HEK293 (cell line): ENCODE measurements at regions of chr6 and their contacts with region 1.

Region 1: DNA sequence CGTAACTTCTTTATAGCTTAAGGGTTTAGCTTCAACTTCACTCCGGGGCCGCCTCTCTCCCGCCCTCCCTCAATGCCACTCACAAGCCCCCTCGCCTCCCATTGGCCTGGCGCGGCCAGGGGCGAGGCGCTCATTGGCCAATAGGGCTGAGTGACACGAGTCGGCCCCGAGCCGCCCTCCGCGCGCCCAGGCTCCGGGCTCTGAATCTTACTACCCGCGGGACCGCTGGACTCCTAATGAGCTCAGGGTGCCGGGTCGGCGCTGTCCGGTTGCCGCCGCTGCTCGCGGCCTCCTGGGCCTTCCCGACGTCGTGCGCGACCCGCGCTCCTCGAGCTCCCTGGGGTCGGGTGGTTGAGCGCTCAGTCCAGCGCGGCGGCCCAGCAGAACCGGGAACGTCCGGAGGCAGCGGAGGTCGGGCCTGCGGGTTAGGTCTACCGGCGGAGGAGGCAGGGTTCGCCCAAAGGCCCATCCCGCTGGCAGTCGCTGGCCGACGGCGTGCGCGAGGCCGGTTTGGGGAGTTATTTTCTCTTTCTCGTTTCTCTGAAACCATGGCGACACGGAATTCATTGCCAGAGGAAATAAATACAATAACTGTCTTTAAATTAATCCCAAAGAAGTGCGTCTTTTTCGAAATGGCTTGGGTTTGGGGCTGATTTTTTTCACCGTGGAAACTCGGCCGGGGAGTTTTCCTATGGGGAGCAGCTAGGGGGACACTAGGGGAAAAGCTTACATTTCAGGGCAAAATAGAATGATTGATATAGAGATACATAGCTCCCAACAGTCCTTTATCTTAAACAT is at the start of gene SIM1:
- H3K4me3 ChIP-seq: peak within 1 kb of the TSS; percentile 60
- H3K27ac ChIP-seq: peak within 1 kb of the TSS; percentile 75
- H3K4me1 ChIP-seq: peaks cover 3% of the 10 kb centered on the region
- CTCF ChIP-seq: peak; percentile 13; the same call in 1 of the 2 replicates

Region 2: DNA sequence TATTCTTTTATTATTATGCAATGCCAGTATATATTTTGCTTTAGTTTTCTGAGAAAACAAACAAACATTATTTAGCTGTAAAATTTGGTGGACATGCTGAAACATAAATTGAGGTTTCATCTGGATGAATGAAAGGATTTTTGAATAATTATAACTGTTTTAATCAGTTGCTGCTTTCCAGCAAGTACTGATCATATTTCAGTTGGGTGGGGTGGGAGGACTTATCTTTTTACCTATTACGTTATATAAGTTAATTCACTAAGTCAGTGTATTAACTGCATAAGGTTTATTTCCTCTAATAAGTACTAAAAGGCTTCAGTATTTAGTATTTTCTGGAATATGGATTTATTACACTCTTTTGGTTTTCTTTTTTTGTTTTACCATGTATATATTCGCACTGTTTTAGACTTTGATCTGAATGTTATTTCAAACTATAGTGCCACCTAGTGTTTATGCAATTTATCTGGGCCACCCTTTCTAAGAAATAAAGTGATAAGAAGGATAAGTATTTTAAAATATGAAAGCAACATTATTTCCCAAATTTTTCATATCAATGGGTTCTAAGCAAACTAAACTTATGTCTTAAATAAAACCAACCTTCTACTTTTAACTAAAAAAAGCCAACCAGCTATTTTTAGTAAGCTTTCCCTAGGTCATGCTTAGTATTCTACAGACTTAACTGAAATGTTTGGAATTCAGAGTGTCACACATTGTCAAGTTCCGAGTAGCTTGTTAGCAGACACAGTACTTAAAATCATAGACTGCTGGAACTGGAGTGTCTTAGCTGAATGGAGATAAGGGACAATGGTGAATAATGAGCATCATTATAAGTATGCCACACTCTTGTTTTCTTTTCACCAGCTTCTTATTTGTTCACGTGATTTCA is 365.7 kb before region 1 on chr6:
- CTCF ChIA-PET with region 1: no interaction called
- POLR2A ChIA-PET with region 1: no interaction called
- H3K4me3 ChIP-seq: no peak overlapping the region
- H3K27ac ChIP-seq: no peak overlapping the region
- H3K4me1 ChIP-seq: no peaks in the 10 kb centered on the region
- CTCF ChIP-seq: no peak

Region 3: GRCh38 chr6:100209323-100210136 is 255.6 kb before region 1 on chr6:
- CTCF ChIA-PET with region 1: no interaction called
- POLR2A ChIA-PET with region 1: no interaction called
- H3K4me3 ChIP-seq: no peak overlapping the region
- H3K27ac ChIP-seq: no peak overlapping the region
- H3K4me1 ChIP-seq: no peaks in the 10 kb centered on the region
- CTCF ChIP-seq: no peak

Region 4: DNA sequence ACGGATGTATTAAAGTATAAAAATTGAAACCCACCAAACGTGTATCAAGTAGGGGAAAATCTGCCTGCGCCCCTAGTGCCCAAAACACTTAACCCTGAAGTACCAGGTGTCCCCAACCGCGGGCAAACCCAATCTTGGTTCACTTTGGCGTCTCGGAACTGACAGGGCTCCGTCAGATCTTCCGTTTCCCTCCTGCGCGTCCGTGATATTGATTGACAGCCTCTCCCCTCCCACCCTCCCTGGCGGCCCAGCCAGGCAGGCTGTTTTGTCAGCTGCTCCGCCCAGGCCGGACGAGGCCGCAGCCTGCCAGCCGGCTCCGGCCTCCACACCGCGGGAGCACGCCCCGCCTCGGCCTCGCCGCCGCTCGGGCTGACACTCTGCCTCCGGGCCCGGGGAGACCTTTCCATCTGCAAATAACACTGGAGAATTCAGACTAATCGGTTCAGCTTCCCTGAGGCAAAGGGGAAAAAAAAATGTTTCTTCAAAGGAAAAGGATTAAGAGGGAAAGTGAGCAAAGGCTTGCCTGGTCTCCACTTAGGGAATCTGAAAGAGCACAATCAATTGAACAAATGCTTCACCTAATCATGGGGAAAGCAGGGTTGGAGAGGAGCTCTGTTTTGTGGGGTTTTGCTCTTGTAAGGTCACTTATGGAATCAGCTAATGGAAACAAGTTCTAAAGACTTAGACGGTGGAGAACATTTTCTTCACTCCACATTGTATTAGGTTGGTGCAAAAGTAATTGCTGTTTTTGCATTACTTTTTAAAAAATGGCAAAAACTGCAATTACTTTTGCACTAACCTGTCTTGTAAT is 236.1 kb before region 1 on chr6:
- CTCF ChIA-PET with region 1: interaction called, 3 read pairs
- POLR2A ChIA-PET with region 1: interaction called, 11 read pairs
- H3K4me3 ChIP-seq: peak overlapping the region; percentile 49
- H3K27ac ChIP-seq: peak overlapping the region; percentile 70
- H3K4me1 ChIP-seq: peaks cover 4% of the 10 kb centered on the region; the same call in 1 of the 2 replicates
- CTCF ChIP-seq: peak; percentile 55; the same call in 1 of the 2 replicates

Region 5: GRCh38 chr6:100420711-100421110 is 44.4 kb before region 1 on chr6:
- CTCF ChIA-PET with region 1: interaction called, 11 read pairs
- POLR2A ChIA-PET with region 1: interaction called, 3 read pairs
- H3K4me3 ChIP-seq: no peak overlapping the region
- H3K27ac ChIP-seq: no peak overlapping the region
- H3K4me1 ChIP-seq: no peaks in the 10 kb centered on the region; the same call in 1 of the 2 replicates
- CTCF ChIP-seq: no peak

Region 6: DNA sequence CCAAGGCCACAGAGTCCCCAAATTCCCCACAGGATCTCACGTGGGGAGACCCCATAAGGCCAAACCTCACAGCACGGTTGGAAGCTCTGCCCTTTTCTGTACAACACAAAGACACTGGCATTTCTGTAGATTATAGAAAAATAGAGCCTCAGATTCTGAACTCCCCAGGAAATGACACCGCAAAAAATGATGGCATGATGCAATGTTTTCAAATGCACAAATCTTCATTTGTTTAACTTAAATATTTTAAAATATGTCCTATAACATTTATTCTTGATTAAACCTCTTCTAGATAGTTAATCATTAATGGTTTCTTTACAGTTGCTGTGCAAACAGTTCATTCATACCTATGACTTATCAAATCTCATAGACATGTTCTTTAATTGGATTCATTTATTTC is 34.1 kb before region 1 on chr6:
- CTCF ChIA-PET with region 1: interaction called, 12 read pairs
- POLR2A ChIA-PET with region 1: interaction called, 4 read pairs
- H3K4me3 ChIP-seq: no peak overlapping the region
- H3K27ac ChIP-seq: no peak overlapping the region
- H3K4me1 ChIP-seq: no peaks in the 10 kb centered on the region
- CTCF ChIP-seq: no peak

Region 7: DNA sequence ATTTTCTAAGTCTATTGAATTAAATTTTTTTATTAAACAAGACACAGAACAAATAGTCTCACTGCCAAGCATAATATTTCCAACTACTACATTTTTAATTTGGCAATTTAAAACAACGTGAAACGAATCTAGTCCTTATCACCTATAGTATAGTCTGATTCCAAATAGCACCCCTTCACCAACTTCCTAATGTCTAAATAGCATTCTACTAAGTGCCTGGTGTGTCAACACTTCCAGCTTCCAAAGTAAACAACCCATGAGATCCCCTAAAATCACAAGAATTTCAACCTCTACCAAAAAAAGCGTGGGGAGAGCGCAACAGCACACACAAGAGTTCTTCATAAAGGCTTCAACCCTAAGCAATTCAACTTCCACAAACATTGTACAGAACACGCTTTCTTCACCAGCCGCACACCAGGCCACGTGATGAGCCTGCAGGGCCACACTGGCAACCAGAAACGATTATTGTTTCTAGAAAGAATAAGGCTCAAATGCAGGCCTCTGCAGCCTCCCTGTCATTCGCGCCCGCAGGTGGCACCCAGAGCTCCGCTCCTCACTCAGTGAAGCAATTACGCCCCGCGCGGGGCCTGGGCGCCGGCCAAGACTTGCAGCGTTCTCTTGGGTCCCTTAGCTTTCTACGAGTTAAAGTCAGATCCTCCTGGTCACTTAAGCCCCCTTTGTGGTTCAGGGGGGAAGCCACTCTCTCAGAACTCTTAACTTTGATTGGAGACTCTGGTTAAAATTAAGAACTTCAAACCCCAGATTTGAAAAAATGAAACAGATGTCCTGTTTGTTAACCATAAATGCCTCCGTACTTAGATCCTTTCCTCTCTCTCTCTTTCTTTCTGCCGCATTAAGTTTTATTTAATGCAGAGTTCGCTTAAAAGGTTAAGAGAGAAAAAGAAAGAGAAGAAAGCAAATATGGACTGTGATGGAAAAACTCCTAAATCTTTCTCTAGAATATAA is 18.7 kb before region 1 on chr6:
- CTCF ChIA-PET with region 1: interaction called, 23 read pairs
- POLR2A ChIA-PET with region 1: interaction called, 4 read pairs
- H3K4me3 ChIP-seq: no peak overlapping the region
- H3K27ac ChIP-seq: no peak overlapping the region
- H3K4me1 ChIP-seq: no peaks in the 10 kb centered on the region
- CTCF ChIP-seq: no peak

Region 8: GRCh38 chr6:100451577-100451976 is 13.5 kb before region 1 on chr6:
- CTCF ChIA-PET with region 1: interaction called, 23 read pairs
- POLR2A ChIA-PET with region 1: interaction called, 4 read pairs
- H3K4me3 ChIP-seq: no peak overlapping the region
- H3K27ac ChIP-seq: no peak overlapping the region
- H3K4me1 ChIP-seq: no peaks in the 10 kb centered on the region
- CTCF ChIP-seq: no peak

Region 9: DNA sequence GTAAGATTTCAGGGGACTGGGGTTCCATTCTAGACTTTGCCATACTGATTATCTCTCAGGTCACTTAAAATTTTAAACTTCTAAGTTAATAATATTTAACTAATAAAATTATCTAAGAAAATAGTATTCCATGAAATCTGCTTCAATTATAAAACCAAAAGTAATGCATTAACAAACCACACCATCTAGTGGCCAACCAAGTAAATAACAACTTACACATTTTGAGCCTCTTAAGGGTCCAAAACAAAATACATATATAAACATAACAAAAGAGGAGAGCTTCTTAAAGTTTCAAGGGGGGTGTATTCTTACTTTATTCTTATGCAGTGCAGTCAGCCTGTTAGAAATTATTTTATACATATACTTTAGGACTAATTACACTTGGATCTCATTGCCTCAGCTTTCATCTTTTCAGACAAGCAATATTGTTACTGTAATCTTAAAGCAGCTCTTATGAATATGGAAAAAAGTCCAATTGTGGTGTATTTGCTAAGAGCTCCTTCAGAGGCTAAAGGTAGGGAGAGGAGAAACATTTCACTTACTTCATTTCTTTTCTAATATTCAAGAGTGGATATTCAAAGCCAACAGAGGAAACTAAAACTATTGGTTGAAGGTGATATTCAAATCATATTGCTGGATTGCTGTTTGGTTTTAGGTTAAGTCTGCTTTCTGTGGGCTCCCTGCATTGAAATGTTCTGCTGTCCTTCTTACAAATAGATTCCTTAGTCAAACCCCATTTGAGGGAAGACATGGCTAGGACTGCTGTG is 199.4 kb after region 1 on chr6:
- CTCF ChIA-PET with region 1: interaction called, 11 read pairs
- POLR2A ChIA-PET with region 1: no interaction called
- H3K4me3 ChIP-seq: no peak overlapping the region
- H3K27ac ChIP-seq: no peak overlapping the region
- H3K4me1 ChIP-seq: no peaks in the 10 kb centered on the region
- CTCF ChIP-seq: no peak